ENCODE measurements at regions of chr5 and their contacts with region 1.

Region 1: GRCh38 chr5:163695830-163696578 is 190.6 kb downstream of the MAT2B start:
- DNase-seq: peak; percentile 89
- ATAC-seq: peak; percentile 99
- H3K4me3 ChIP-seq: no peak overlapping the region
- H3K27ac ChIP-seq: no peak overlapping the region
- H3K4me1 ChIP-seq: no peaks in the 10 kb centered on the region; the same call in 1 of the 2 replicates
- H3K27me3 ChIP-seq: no peaks in the 10 kb centered on the region
- CTCF ChIP-seq: peak; percentile 88
- POLR2A ChIP-seq: no peak; the same call in 1 of the 2 replicates
- RAD21 ChIP-seq: peak; percentile 98

Region 2: DNA sequence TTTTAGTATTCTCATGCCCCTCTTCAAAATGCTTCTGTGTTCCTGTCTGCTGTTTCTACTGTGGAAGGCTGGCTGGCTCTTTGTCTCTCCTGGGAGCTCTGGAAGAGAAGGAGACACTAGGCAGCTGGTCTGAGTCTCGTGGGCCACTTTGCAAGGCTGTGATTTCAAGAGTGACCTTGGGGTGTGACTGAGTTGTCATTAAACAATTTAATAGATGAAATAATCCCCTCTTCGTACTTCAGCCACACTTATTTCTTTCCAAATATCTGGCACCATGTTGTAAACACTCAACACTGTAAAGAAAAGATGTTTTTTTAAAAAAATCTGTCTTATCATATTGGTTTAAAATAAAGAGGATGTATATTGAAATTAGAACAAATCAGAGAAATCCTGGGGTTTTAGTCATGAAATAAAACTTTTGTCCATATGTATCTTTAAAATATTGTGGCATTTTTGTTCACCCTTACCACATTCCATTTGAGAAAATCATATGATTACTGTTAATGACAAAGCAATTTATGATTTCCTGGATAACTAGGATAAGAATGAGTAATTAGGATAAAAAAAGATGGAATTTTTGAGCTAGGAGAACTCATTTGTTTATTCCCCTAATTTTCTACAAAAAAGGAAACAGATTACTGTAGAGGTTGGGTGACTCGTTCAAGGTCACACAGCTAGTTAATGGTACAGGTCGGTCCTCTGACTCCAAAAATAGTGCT is 10.2 kb after region 1 on chr5:
- CTCF ChIA-PET with region 1: interaction called, 10 read pairs
- POLR2A ChIA-PET with region 1: no interaction called
- dilution Hi-C with region 1: no loop called
- in situ Hi-C with region 1: no loop called
- intact Hi-C with region 1: no loop called
- DNase-seq: peak; percentile 86
- ATAC-seq: peak; percentile 80
- H3K4me3 ChIP-seq: peak overlapping the region; percentile 25; the same call in 1 of the 2 replicates
- H3K27ac ChIP-seq: peak overlapping the region; percentile 96
- H3K4me1 ChIP-seq: peaks cover 9% of the 10 kb centered on the region
- H3K27me3 ChIP-seq: no peaks in the 10 kb centered on the region
- CTCF ChIP-seq: no peak
- POLR2A ChIP-seq: no peak
- RAD21 ChIP-seq: no peak

Region 3: DNA sequence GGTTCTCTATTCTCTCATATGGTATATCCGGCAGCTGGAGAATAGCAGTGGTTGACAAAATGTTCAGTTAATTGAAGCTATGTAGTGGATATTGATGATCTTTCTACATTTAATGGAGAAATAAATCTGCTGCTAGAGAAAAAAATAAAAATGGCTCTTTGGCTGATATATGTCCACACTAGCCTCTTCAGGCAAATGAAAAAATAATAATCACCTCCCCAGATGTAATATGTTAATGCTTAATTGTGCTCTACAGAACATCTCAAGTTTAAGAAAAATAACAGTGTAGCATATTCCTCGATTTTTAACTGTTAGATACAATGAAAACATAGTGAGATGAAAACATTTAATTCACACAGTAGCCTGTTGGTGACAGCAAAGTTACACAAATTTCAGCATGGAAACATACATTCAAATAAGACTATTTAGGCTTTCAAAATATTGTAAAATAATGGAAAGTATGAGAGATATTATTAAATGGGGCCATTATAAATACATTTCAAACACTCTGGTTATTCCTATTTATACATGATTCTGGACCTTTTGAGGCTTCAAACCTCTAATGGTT is 352.4 kb after region 1 on chr5:
- CTCF ChIA-PET with region 1: interaction called, 4 read pairs
- POLR2A ChIA-PET with region 1: no interaction called
- dilution Hi-C with region 1: no loop called
- in situ Hi-C with region 1: no loop called
- intact Hi-C with region 1: loop called (anchors 1 kb)
- DNase-seq: peak; percentile 44
- ATAC-seq: no peak
- H3K4me3 ChIP-seq: no peak overlapping the region
- H3K27ac ChIP-seq: no peak overlapping the region
- H3K4me1 ChIP-seq: no peaks in the 10 kb centered on the region
- H3K27me3 ChIP-seq: no peaks in the 10 kb centered on the region
- CTCF ChIP-seq: peak; percentile 54
- POLR2A ChIP-seq: no peak
- RAD21 ChIP-seq: peak; percentile 58

Region 4: DNA sequence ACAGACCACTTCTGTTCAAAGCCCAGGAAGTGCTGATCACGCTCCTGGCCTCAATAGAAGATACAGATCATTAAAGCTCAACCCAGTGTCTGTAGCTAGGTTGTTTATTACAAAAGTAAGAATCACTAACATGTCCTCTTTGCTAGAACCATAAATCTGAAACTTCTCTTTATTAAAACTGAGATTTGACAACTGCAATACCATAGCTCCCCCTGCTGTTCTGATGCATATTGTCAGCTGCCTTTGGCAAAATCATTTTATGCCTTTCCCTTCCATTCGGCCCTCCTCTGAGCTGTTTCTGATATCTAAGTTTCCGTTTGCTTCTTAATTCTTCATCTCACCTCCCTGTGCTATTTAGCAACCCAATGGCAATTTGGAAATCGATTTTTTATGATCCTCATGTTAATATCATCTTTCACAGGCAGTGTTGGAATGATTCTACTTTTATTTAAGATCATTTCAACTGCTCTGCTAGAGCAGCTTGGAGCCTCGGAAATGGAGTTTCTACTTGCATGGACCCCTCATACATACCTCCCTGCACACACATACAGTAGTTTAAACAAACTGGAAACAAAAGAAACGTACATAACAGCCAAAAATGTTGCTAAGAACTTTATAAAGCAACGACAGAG is 808.3 kb after region 1 on chr5:
- CTCF ChIA-PET with region 1: interaction called, 15 read pairs
- POLR2A ChIA-PET with region 1: no interaction called
- dilution Hi-C with region 1: no loop called
- in situ Hi-C with region 1: loop called (anchors 5 kb)
- intact Hi-C with region 1: loop called (anchors 1 kb)
- DNase-seq: peak; percentile 69
- ATAC-seq: peak; percentile 89
- H3K4me3 ChIP-seq: no peak overlapping the region
- H3K27ac ChIP-seq: no peak overlapping the region
- H3K4me1 ChIP-seq: no peaks in the 10 kb centered on the region
- H3K27me3 ChIP-seq: no peaks in the 10 kb centered on the region
- CTCF ChIP-seq: peak; percentile 93
- POLR2A ChIP-seq: no peak
- RAD21 ChIP-seq: peak; percentile 94

Region 5: GRCh38 chr5:165209086-165209727 is 1513.2 kb after region 1 on chr5:
- CTCF ChIA-PET with region 1: no interaction called
- POLR2A ChIA-PET with region 1: no interaction called
- dilution Hi-C with region 1: no loop called
- in situ Hi-C with region 1: no loop called
- intact Hi-C with region 1: loop called (anchors 2 kb)
- DNase-seq: peak; percentile 37
- ATAC-seq: no peak
- H3K4me3 ChIP-seq: no peak overlapping the region
- H3K27ac ChIP-seq: no peak overlapping the region
- H3K4me1 ChIP-seq: no peaks in the 10 kb centered on the region
- H3K27me3 ChIP-seq: no peaks in the 10 kb centered on the region
- CTCF ChIP-seq: peak; percentile 61
- POLR2A ChIP-seq: no peak
- RAD21 ChIP-seq: peak; percentile 37

Region 6: GRCh38 chr5:165616490-165617430 is 1920.8 kb after region 1 on chr5:
- CTCF ChIA-PET with region 1: no interaction called
- POLR2A ChIA-PET with region 1: no interaction called
- dilution Hi-C with region 1: no loop called
- in situ Hi-C with region 1: no loop called
- intact Hi-C with region 1: loop called (anchors 1 kb)
- DNase-seq: peak; percentile 62
- ATAC-seq: peak; percentile 90
- H3K4me3 ChIP-seq: no peak overlapping the region
- H3K27ac ChIP-seq: no peak overlapping the region
- H3K4me1 ChIP-seq: peaks cover 2% of the 10 kb centered on the region; the same call in 1 of the 2 replicates
- H3K27me3 ChIP-seq: no peaks in the 10 kb centered on the region
- CTCF ChIP-seq: peak; percentile 43
- POLR2A ChIP-seq: no peak
- RAD21 ChIP-seq: peak; percentile 35; the same call in 1 of the 2 replicates

Measured in IMR-90 (cell line).